Dendritic cell treated with granulocyte-macrophage colony-stimulating factor and Interleukin-4, amounts not matched to agents 40 ng/mL and 50 ng/mL, for 4 days (primary cell): ENCODE measurements at regions of chr9 and their contacts with region 1.

Region 1: GRCh38 chr9:93501406-93501805 is 48.0 kb upstream of the FAM120AOS start:
- H3K4me3 Mint-ChIP-seq: peak overlapping the region; percentile 62
- H3K27ac Mint-ChIP-seq: peak overlapping the region; percentile 50
- H3K4me1 Mint-ChIP-seq: peaks cover 59% of the 10 kb centered on the region
- H3K27me3 Mint-ChIP-seq: no peaks in the 10 kb centered on the region

Region 2: DNA sequence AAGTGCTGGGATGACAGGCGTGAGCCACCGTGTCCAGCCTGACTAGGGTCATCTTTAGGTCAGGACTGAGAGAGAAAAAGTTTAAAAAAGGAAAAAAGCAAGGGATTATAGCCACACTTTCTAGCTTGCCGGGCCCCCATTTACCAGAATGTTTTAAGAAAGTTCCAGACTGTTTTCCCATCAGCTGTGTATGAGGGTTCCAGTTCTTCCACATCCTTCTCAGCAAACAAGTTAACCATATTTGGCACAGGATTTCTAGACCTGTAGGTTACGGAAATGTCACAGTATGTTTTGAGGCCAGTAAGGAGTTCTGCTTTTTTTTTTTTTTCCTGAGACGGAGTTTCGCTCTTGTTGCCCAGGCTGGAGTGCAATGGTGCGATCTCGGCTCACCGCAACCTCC is 57.1 kb before region 1 on chr9:
- intact Hi-C with region 1: no loop called
- H3K4me3 Mint-ChIP-seq: no peak overlapping the region
- H3K27ac Mint-ChIP-seq: no peak overlapping the region
- H3K4me1 Mint-ChIP-seq: no peaks in the 10 kb centered on the region
- H3K27me3 Mint-ChIP-seq: no peaks in the 10 kb centered on the region

Region 3: DNA sequence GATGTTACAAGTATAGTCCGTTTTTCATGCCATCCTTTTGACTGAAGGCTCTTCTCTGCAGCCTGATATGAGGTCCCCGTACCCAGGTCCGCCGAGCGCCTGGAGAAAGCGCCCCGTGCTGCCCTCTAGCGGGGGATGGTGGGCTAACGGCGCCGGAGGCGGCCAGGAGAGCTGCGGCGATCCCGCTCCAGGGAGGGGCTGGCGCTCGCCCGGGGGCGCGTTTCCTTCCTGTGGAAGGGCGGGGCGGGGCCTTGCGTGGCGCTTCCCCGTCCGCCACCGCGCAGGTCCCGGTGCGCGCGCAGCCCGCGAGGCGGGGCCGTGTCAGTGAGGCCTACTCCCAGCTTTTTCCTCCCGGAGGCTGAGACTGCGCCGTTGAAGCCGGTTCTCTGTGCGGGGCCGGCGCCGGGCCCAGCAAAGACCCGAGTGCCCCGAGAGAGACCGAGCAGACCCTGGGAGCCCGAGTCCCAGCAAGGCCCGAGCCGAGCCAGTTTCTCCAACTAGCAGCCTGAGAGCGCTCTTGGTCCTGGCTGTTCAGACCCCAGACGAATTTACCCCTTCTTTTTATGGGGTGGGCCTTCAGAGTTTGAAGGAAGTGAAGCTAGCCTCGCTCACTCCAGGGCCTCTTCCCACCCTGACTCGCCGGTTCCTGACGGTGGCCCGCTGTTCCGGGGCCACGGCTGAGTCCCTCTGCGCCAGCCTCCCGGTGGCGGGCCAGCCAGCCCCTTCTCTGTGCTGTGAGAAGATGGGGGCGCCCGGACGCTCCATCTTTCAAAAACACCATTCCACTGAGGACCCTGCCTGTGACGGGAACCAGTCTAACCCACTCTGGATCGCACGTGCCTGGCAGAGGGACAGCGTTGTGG is 65.2 kb after region 1 on chr9:
- intact Hi-C with region 1: loop called (anchors 5 kb)
- H3K4me3 Mint-ChIP-seq: peak overlapping the region; percentile 76
- H3K27ac Mint-ChIP-seq: peak overlapping the region; percentile 91
- H3K4me1 Mint-ChIP-seq: peaks cover 41% of the 10 kb centered on the region
- H3K27me3 Mint-ChIP-seq: no peaks in the 10 kb centered on the region